CD4-positive, alpha-beta memory T cell (primary cell): ENCODE measurements at regions of chr6 and their contacts with region 1.

Region 1: GRCh38 chr6:37819177-37819823 is at the start of gene ZFAND3:
- DNase-seq: peak; percentile 92 to 98 (median 96)
- H3K4me3 ChIP-seq: peak within 1 kb of the TSS; percentile 80 to 90
- H3K4me3 Mint-ChIP-seq: peak within 1 kb of the TSS; percentile 96 to 99 (median 98)
- H3K27ac ChIP-seq: peak within 1 kb of the TSS; percentile 82
- H3K27ac Mint-ChIP-seq: peak within 1 kb of the TSS; percentile 99 to 100 (median 99)
- H3K4me1 ChIP-seq: peaks cover 44% of the 10 kb centered on the region
- H3K4me1 Mint-ChIP-seq: peaks cover 36 to 66% (median 50%) of the 10 kb centered on the region in 4 donors
- H3K27me3 ChIP-seq: no peaks in the 10 kb centered on the region
- H3K27me3 Mint-ChIP-seq: no peaks in the 10 kb centered on the region
- total RNA-seq, gene ZFAND3: 32.7 to 33.0 TPM

Region 2: DNA sequence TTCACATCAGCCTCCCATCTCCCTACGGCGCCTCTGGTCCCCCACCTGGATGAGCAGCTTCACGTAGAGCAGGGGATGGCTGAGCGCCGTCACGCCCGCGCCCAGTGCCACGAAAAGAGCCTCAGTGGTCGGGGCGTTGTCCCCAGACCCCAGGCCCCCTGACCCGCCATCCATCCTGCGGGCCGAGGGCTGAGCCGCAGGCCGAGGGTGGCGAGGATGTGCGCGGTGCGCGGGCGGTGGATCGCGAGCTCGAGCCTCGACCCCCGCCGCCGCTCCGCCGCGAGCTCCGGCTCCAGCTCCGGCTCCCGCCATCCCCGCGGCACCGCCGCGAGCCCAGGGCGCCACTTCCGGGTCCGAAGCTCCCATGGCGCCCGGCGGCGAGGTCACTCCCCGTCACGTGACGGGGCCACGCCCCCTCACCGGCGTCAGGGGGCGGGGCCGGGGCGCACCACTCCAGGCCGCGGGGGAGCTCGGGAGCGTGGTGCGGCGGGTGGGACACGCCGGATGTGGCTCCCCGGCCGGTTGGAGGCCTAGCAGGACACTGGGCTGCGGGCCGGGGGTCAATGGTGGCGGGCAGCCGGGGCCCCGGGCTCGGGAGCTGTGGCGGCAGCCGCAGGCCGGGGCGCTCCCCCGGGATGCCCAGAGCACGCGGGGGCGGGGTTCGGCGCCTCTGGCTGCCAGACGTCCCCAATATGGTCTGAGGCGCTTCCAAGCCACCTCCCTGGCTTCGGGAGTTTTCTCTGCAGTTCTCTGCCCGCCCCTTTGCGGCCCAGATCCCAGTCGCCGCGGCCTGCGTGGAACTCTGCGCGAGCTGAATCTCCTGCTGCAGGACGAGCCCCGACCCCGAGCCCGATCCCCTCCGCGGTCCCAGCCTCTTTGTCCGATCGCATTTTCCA is 833.2 kb before region 1 on chr6 and contains the start of gene MTCH1:
- CTCF ChIA-PET with region 1: no interaction called
- POLR2A ChIA-PET with region 1: interaction called, 5 read pairs
- intact Hi-C with region 1: loop called (anchors 2 kb)
- DNase-seq: peak; percentile 89 to 95 (median 90)
- H3K4me3 ChIP-seq: peak within 1 kb of the TSS; percentile 82 to 93
- H3K4me3 Mint-ChIP-seq: peak within 1 kb of the TSS; percentile 93 to 99 (median 96)
- H3K27ac ChIP-seq: peak within 1 kb of the TSS; percentile 94
- H3K27ac Mint-ChIP-seq: peak within 1 kb of the TSS in 6 of 7 donors; percentile 92 to 98 (median 98)
- H3K4me1 ChIP-seq: peaks cover 41% of the 10 kb centered on the region
- H3K4me1 Mint-ChIP-seq: peaks cover 14 to 30% (median 16%) of the 10 kb centered on the region in 4 donors
- H3K27me3 ChIP-seq: no peaks in the 10 kb centered on the region
- H3K27me3 Mint-ChIP-seq: peaks cover 0 to 2% of the 10 kb centered on the region in 2 donors
- total RNA-seq, gene MTCH1: 142 to 151 TPM

Region 3: GRCh38 chr6:37499433-37500293 is 319.6 kb before region 1 on chr6 and contains the start of gene CCDC167:
- CTCF ChIA-PET with region 1: no interaction called
- POLR2A ChIA-PET with region 1: no interaction called
- intact Hi-C with region 1: loop called (anchors 10 kb)
- DNase-seq: peak; percentile 92 to 98 (median 94)
- H3K4me3 ChIP-seq: peak within 1 kb of the TSS; percentile 80 to 90
- H3K4me3 Mint-ChIP-seq: peak within 1 kb of the TSS; percentile 95 to 99 (median 97)
- H3K27ac ChIP-seq: peak within 1 kb of the TSS; percentile 91
- H3K27ac Mint-ChIP-seq: peak within 1 kb of the TSS; percentile 98 to 100 (median 100)
- H3K4me1 ChIP-seq: peaks cover 90% of the 10 kb centered on the region
- H3K4me1 Mint-ChIP-seq: peaks cover 60 to 97% (median 82%) of the 10 kb centered on the region in 4 donors
- H3K27me3 ChIP-seq: no peaks in the 10 kb centered on the region
- H3K27me3 Mint-ChIP-seq: no peaks in the 10 kb centered on the region
- total RNA-seq, gene CCDC167: 25.1 to 27.8 TPM

Region 4: DNA sequence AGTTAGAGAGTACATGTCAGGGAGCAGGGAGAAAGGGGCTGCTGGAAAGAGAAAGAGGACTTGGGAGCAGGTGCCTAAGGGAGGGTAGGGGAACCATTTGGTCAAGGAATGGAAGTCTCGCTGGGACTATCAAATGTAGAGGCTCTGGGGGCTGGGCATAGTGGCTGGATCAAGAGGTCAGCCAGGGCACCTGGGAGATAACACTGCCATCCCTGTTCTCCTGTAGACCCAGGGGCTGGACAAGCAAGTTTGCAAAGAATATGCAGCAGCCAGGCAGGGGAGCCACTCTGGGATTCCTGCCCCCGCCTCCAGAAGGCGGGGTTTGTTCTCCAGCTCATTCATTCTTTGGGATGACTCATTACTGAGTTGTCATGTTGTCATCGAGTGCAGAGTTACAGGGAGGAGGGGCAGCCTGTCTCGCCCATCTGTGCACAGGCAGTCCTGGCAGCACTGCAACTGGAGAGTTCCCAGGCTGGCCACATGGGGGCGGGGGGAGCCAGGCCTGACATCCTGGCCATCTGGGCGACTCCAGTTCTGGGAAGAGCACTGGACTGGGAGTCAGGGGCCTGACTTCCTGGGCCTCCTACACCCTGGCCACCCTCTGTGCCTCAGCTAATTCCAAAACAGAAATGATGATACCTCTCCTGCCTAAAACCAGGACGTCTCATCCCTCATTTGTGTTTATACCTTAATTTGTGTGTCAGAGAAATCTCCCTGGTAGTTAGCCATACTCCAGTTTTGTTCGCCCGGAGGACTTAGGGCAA is 28.0 kb before region 1 on chr6:
- CTCF ChIA-PET with region 1: interaction called, 5 read pairs
- POLR2A ChIA-PET with region 1: interaction called, 11 read pairs
- intact Hi-C with region 1: loop called (anchors 1 kb)
- DNase-seq: peak; percentile 55 to 87 (median 63)
- H3K4me3 ChIP-seq: no peak overlapping the region
- H3K4me3 Mint-ChIP-seq: no peak overlapping the region
- H3K27ac ChIP-seq: no peak overlapping the region
- H3K27ac Mint-ChIP-seq: peak overlapping the region in 1 of 7 donors; percentile 38
- H3K4me1 ChIP-seq: no peaks in the 10 kb centered on the region
- H3K4me1 Mint-ChIP-seq: peaks cover 2 to 9% (median 5%) of the 10 kb centered on the region in 4 donors
- H3K27me3 ChIP-seq: no peaks in the 10 kb centered on the region
- H3K27me3 Mint-ChIP-seq: peaks cover 0 to 1% of the 10 kb centered on the region in 2 donors

Region 5: GRCh38 chr6:37860226-37860839 is 41.0 kb after region 1 on chr6:
- CTCF ChIA-PET with region 1: interaction called, 4 read pairs
- POLR2A ChIA-PET with region 1: interaction called, 8 read pairs
- intact Hi-C with region 1: loop called (anchors 1 kb)
- DNase-seq: peak; percentile 7 to 41 (median 12)
- H3K4me3 ChIP-seq: no peak overlapping the region
- H3K4me3 Mint-ChIP-seq: no peak overlapping the region
- H3K27ac ChIP-seq: no peak overlapping the region
- H3K27ac Mint-ChIP-seq: peak overlapping the region in 2 of 7 donors; percentile 19 to 68
- H3K4me1 ChIP-seq: peaks cover 30% of the 10 kb centered on the region
- H3K4me1 Mint-ChIP-seq: peaks cover 38 to 65% (median 46%) of the 10 kb centered on the region in 4 donors
- H3K27me3 ChIP-seq: no peaks in the 10 kb centered on the region
- H3K27me3 Mint-ChIP-seq: no peaks in the 10 kb centered on the region

Region 6: DNA sequence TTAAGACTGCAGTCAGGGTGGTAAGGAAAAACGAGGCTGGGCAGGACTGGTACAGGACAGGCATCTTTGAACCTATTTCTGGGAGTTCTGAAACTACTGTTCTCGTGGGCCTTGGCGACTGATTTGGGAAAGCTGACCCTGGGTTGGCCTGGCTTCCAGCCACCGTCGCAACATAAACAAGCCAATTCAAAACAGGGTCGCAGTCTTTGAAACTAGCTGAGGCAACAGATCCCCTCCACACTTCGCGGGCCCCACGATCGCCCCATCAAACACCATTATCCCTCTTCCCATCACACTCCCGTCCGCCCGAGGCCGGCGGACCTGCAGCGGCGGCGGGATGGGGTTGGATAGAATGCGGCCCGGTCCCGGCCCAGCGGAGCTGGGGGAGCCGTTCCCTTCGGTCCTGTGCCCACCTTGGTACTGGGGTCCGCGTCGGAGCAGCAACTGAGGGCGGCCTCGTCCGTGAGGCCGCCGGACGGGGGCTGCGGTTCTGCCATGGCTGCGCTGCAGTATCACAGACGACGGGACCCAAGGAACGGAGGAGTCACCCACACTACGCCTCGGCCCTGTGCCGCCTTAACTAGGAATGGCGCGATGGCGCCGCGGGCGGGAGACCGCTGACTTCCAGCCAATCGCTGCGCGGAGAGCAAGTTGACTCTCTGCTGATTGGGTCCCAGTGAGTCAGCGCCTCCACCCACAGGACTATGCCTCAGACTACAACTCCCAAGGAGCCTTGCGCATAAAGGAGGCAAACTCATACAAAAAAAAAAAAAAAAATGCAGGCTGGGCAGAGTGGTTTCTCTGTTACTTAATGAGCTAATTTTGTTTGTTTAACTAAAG is 883.5 kb after region 1 on chr6 and contains the start of gene GLO1:
- CTCF ChIA-PET with region 1: no interaction called
- POLR2A ChIA-PET with region 1: interaction called, 5 read pairs
- intact Hi-C with region 1: loop called (anchors 1 kb)
- DNase-seq: peak; percentile 94 to 98 (median 95)
- H3K4me3 ChIP-seq: peak within 1 kb of the TSS; percentile 56 to 91
- H3K4me3 Mint-ChIP-seq: peak within 1 kb of the TSS; percentile 83 to 96 (median 88)
- H3K27ac ChIP-seq: peak within 1 kb of the TSS; percentile 85
- H3K27ac Mint-ChIP-seq: peak within 1 kb of the TSS; percentile 83 to 98 (median 92)
- H3K4me1 ChIP-seq: peaks cover 11% of the 10 kb centered on the region
- H3K4me1 Mint-ChIP-seq: peaks cover 21 to 38% (median 27%) of the 10 kb centered on the region in 4 donors
- H3K27me3 ChIP-seq: no peaks in the 10 kb centered on the region
- H3K27me3 Mint-ChIP-seq: peaks cover 3 to 7% of the 10 kb centered on the region in 2 donors
- total RNA-seq, gene GLO1: 28.3 to 28.7 TPM